ENCODE measurements at regions of chr2 and their contacts with region 1.

Region 1: DNA sequence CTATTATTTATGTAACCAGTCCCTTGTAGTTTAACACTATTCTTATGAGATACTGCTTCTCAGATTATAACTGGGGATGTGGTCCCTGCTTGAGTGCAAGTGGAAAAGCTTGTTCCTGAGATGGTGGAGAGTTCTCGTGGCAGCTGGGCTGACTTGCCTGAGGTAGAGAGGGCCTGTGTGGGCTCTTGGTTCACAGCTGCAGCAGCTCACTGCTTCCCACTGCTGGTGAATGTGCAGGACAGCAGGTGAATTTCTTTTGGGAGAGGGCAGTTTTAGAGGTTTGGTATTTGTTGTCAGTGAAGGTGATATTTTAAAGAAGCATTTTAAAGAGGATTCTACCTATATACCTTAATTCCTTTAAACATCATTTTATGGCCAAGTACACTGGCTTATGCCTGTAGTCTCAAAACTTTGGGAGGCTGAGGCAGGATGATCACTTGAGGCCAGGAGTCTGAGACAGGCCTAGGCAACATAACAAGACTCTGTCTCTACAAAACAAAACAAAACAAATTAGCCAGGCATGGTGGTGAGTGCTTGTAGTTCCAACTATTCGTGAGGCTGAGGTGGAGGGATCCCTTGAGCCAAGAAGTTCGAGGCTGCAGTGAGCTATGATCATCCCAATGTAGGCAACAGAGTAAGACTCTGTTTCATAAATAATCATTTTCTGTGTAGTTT is 94.8 kb downstream of the MTA3 start:
- DNase-seq: peak; percentile 26 to 85 (median 75)
- ATAC-seq: peak; percentile 96
- H3K4me3 ChIP-seq: no peak overlapping the region
- H3K4me3 Mint-ChIP-seq: peak overlapping the region in 7 of 10 donors; percentile 31 to 69 (median 53)
- H3K27ac ChIP-seq: peak overlapping the region; percentile 43
- H3K27ac Mint-ChIP-seq: peak overlapping the region in 8 of 9 donors; percentile 29 to 95 (median 83)
- H3K4me1 ChIP-seq: peaks cover 0 to 5% of the 10 kb centered on the region in 2 donors
- H3K4me1 Mint-ChIP-seq: peaks cover 8 to 60% (median 25%) of the 10 kb centered on the region in 7 donors
- H3K27me3 ChIP-seq: no peaks in the 10 kb centered on the region
- H3K27me3 Mint-ChIP-seq: no peaks in the 10 kb centered on the region

Region 2: GRCh38 chr2:40872580-40872979 is 1790.7 kb before region 1 on chr2:
- CTCF ChIA-PET with region 1: no interaction called
- POLR2A ChIA-PET with region 1: no interaction called
- intact Hi-C with region 1: no loop called
- DNase-seq: no peak
- ATAC-seq: no peak
- H3K4me3 ChIP-seq: no peak overlapping the region
- H3K4me3 Mint-ChIP-seq: no peak overlapping the region
- H3K27ac ChIP-seq: no peak overlapping the region
- H3K27ac Mint-ChIP-seq: no peak overlapping the region
- H3K4me1 ChIP-seq: no peaks in the 10 kb centered on the region
- H3K4me1 Mint-ChIP-seq: no peaks in the 10 kb centered on the region
- H3K27me3 ChIP-seq: no peaks in the 10 kb centered on the region
- H3K27me3 Mint-ChIP-seq: no peaks in the 10 kb centered on the region

Region 3: GRCh38 chr2:41869542-41870264 is 793.5 kb before region 1 on chr2:
- CTCF ChIA-PET with region 1: interaction called, 3 read pairs
- POLR2A ChIA-PET with region 1: no interaction called
- intact Hi-C with region 1: loop called (anchors 1 kb)
- DNase-seq: peak; percentile 31 to 64 (median 52)
- ATAC-seq: peak; percentile 79
- H3K4me3 ChIP-seq: no peak overlapping the region
- H3K4me3 Mint-ChIP-seq: no peak overlapping the region
- H3K27ac ChIP-seq: no peak overlapping the region
- H3K27ac Mint-ChIP-seq: no peak overlapping the region
- H3K4me1 ChIP-seq: no peaks in the 10 kb centered on the region
- H3K4me1 Mint-ChIP-seq: peaks cover 0 to 13% (median 0%) of the 10 kb centered on the region in 7 donors
- H3K27me3 ChIP-seq: no peaks in the 10 kb centered on the region
- H3K27me3 Mint-ChIP-seq: peaks cover 0 to 22% (median 0%) of the 10 kb centered on the region in 5 donors

Region 4: GRCh38 chr2:42328148-42328833 is 335.0 kb before region 1 on chr2:
- CTCF ChIA-PET with region 1: no interaction called
- POLR2A ChIA-PET with region 1: no interaction called
- intact Hi-C with region 1: loop called in 1 of 2 experiments (anchors 5 kb)
- DNase-seq: peak in 5 of 9 donors; percentile 13 to 34 (median 32)
- ATAC-seq: peak; percentile 57
- H3K4me3 ChIP-seq: no peak overlapping the region
- H3K4me3 Mint-ChIP-seq: no peak overlapping the region
- H3K27ac ChIP-seq: no peak overlapping the region
- H3K27ac Mint-ChIP-seq: peak overlapping the region in 7 of 9 donors; percentile 12 to 77 (median 57)
- H3K4me1 ChIP-seq: no peaks in the 10 kb centered on the region
- H3K4me1 Mint-ChIP-seq: peaks cover 0 to 5% (median 0%) of the 10 kb centered on the region in 7 donors
- H3K27me3 ChIP-seq: no peaks in the 10 kb centered on the region
- H3K27me3 Mint-ChIP-seq: no peaks in the 10 kb centered on the region

Region 5: GRCh38 chr2:42464631-42465030 is 198.6 kb before region 1 on chr2:
- CTCF ChIA-PET with region 1: no interaction called
- POLR2A ChIA-PET with region 1: no interaction called
- intact Hi-C with region 1: no loop called
- DNase-seq: no peak
- ATAC-seq: no peak
- H3K4me3 ChIP-seq: no peak overlapping the region
- H3K4me3 Mint-ChIP-seq: no peak overlapping the region
- H3K27ac ChIP-seq: no peak overlapping the region
- H3K27ac Mint-ChIP-seq: no peak overlapping the region
- H3K4me1 ChIP-seq: no peaks in the 10 kb centered on the region
- H3K4me1 Mint-ChIP-seq: peaks cover 0 to 2% (median 0%) of the 10 kb centered on the region in 7 donors
- H3K27me3 ChIP-seq: no peaks in the 10 kb centered on the region
- H3K27me3 Mint-ChIP-seq: peaks cover 0 to 9% (median 0%) of the 10 kb centered on the region in 5 donors

Region 6: GRCh38 chr2:42513257-42513918 is 149.9 kb before region 1 on chr2:
- CTCF ChIA-PET with region 1: interaction called, 15 read pairs
- POLR2A ChIA-PET with region 1: interaction called, 3 read pairs
- intact Hi-C with region 1: loop called (anchors 1 kb)
- DNase-seq: peak in 6 of 9 donors; percentile 6 to 34 (median 28)
- ATAC-seq: no peak
- H3K4me3 ChIP-seq: no peak overlapping the region
- H3K4me3 Mint-ChIP-seq: no peak overlapping the region
- H3K27ac ChIP-seq: no peak overlapping the region
- H3K27ac Mint-ChIP-seq: no peak overlapping the region
- H3K4me1 ChIP-seq: no peaks in the 10 kb centered on the region
- H3K4me1 Mint-ChIP-seq: peaks cover 8 to 15% (median 12%) of the 10 kb centered on the region in 7 donors
- H3K27me3 ChIP-seq: no peaks in the 10 kb centered on the region
- H3K27me3 Mint-ChIP-seq: no peaks in the 10 kb centered on the region

Region 7: DNA sequence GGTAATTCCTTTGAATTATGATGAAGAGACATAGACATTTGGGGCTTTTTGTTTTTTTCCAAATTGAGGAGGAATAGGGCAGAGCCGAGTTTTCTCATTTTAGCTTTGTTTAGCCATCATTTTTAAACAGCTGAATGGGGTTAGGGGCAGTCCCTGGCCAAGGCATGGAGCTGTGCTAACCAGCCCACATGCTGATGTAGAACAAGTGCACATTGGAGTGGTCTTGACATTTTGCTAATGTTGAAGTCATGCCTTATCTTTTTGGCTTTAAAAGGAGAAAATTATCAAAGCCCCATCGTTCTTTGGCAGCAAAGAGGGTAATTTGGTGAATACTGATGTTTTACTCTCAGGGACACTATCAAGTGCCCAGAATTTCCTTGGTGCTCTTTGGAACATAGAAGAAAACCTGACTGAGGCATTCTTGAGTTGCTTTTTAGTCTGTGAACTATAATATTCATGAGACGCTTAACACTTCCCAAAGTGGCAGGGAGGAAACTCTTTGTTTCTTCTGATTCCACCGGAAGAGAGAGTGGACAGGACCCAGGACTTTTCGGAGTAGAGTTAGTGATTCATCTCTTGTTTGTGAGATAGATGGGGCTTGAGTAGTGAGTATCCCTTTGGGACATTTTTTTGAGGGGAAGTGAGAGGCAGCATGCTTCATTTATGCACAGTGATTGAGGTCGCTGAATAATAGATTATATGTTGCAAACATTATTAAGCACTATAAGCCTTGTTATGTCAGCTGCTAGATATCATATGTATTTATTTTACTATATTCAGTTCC is 49.8 kb before region 1 on chr2:
- CTCF ChIA-PET with region 1: interaction called, 4 read pairs
- POLR2A ChIA-PET with region 1: no interaction called
- intact Hi-C with region 1: loop called in 1 of 2 experiments (anchors 2 kb)
- DNase-seq: no peak
- ATAC-seq: no peak
- H3K4me3 ChIP-seq: no peak overlapping the region
- H3K4me3 Mint-ChIP-seq: no peak overlapping the region
- H3K27ac ChIP-seq: no peak overlapping the region
- H3K27ac Mint-ChIP-seq: peak overlapping the region in 5 of 9 donors; percentile 3 to 67 (median 4)
- H3K4me1 ChIP-seq: no peaks in the 10 kb centered on the region
- H3K4me1 Mint-ChIP-seq: peaks cover 0 to 20% (median 4%) of the 10 kb centered on the region in 7 donors
- H3K27me3 ChIP-seq: no peaks in the 10 kb centered on the region
- H3K27me3 Mint-ChIP-seq: no peaks in the 10 kb centered on the region

Region 8: DNA sequence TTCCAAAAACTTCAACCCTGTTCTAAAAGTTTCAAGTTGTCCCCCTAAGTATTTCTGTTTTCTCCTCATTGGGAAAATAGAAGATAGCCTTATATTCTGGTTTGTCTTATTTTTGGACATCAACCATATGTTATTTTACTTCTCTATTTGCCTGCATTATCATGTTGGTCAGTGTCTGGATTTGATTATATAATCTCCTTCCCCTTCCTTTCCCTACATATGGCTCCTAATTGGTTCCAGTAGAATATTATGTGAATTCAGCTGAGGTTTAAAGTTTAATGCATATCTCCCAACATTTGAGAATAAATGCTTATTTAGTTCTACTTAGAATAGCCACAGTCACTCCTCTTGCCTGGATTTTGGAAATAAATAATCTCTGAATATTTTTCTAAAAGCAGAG is 33.7 kb after region 1 on chr2:
- CTCF ChIA-PET with region 1: no interaction called
- POLR2A ChIA-PET with region 1: no interaction called
- intact Hi-C with region 1: no loop called
- DNase-seq: no peak
- ATAC-seq: no peak
- H3K4me3 ChIP-seq: no peak overlapping the region
- H3K4me3 Mint-ChIP-seq: no peak overlapping the region
- H3K27ac ChIP-seq: no peak overlapping the region
- H3K27ac Mint-ChIP-seq: no peak overlapping the region
- H3K4me1 ChIP-seq: no peaks in the 10 kb centered on the region
- H3K4me1 Mint-ChIP-seq: peaks cover 2 to 20% (median 11%) of the 10 kb centered on the region in 7 donors
- H3K27me3 ChIP-seq: no peaks in the 10 kb centered on the region
- H3K27me3 Mint-ChIP-seq: no peaks in the 10 kb centered on the region

Region 9: DNA sequence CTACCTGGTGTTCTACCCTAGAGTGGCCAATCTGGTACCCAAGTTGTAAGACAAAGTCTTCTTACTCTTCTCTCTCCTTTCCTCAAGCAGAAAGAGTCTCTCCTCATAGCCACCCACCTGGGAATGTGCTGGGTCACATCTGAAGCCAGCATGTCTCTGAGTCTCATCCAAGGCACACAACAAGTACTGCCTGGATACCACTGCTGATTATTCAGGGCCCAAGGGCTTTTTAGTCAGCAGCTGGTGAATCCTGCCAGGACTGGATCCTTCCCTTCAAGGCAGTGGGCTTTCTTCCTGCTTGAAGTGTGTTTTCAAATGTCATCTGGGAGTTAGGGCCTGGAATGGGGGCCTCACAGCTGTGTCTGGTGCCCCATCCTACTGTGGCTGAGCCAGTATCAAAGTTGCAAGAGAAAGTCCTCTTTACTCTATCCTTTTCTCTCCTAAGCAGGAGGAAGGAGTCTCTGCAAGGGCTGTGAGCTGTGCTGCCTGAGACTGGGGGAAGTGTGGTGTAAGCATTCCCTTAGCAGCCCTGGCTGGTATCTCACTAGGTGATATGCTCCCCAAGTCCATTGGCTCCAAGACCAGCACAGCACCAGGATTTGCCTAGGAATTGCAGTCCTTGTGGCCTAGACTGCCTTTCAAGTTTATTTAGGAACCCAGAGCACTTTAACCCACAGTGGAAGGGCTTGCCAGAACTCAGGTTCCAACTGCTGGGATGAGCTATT is 73.5 kb after region 1 on chr2:
- CTCF ChIA-PET with region 1: no interaction called
- POLR2A ChIA-PET with region 1: no interaction called
- intact Hi-C with region 1: no loop called
- DNase-seq: no peak
- ATAC-seq: no peak
- H3K4me3 ChIP-seq: no peak overlapping the region
- H3K4me3 Mint-ChIP-seq: no peak overlapping the region
- H3K27ac ChIP-seq: no peak overlapping the region
- H3K27ac Mint-ChIP-seq: no peak overlapping the region
- H3K4me1 ChIP-seq: no peaks in the 10 kb centered on the region
- H3K4me1 Mint-ChIP-seq: peaks cover 0 to 17% (median 10%) of the 10 kb centered on the region in 7 donors
- H3K27me3 ChIP-seq: no peaks in the 10 kb centered on the region
- H3K27me3 Mint-ChIP-seq: no peaks in the 10 kb centered on the region